Right ventricle myocardium superior (tissue), 1 donor: ENCODE measurements at regions of chr9 and their contacts with region 1.

Region 1: DNA sequence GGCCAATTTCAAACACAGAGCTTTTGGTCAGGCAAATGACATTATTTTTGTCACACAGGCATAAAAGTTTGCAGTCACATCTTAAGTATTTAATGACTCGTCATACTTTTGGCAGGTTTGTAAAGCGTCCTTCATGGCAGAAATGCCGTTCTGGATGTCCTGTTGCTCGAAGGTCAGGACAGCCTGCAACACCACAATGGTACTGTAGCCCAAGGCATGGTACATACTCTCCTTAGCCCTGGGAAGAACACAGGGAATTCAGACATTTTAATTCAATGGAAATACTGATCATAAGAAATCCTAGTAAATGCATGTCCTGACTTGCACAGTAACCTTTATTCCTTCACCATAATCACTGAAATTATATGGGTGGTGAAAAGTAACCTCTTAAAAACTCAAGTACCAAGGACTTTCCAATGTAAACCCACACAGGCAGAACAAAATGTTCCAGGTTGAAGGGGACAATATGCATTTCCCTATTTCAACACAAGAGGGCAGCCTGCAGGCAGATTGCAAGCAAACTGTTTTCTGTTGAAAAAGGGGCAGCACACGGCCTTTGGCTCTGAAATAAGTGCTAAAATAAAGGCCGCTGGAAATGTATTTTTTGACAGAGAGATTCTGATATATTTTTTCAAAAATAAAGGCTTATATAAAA is 95.7 kb downstream of the TTC39B start:
- DNase-seq: no peak
- ATAC-seq: peak; percentile 86

Region 2: DNA sequence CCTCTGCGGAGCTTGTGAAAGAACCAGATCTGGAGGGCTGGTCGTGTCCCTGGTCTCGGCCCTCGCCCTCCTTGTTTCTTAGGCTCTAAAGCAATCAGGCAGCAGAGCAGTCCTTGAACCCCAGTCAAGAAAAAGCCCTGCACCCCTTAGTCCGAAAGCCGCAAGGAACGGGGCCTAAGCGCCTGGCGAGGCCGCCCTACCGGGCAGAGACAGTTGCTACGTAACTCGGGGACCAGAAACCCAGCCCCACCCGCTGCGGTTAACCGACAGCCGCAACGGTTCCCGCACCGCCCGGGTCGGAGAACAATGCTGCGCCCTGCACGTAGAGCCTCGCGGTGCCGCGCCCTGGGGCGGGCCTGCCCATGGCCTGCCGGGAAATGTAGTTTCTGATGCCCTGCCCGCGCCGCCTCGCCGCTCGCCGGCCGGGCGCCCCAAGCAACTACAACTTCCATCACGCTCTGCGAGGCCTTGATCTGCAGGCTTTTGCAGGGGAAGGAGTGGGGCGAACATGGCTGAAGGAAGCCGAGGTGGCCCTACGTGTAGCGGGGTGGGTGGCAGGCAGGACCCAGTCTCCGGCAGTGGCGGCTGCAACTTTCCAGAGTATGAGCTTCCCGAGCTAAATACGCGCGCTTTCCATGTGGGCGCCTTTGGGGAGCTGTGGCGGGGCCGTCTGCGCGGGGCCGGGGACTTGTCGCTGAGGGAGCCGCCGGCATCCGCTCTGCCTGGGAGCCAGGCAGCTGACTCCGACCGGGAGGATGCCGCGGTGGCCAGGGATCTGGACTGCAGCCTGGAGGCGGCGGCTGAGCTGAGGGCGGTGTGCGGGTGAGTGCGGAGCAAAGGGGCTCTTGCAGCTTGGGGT is 211.3 kb after region 1 on chr9 and contains the start of gene SNAPC3:
- intact Hi-C with region 1: loop called (anchors 10 kb)
- DNase-seq: peak; percentile 97
- ATAC-seq: peak; percentile 100
- total RNA-seq, gene SNAPC3: 32.1 TPM

Region 3: DNA sequence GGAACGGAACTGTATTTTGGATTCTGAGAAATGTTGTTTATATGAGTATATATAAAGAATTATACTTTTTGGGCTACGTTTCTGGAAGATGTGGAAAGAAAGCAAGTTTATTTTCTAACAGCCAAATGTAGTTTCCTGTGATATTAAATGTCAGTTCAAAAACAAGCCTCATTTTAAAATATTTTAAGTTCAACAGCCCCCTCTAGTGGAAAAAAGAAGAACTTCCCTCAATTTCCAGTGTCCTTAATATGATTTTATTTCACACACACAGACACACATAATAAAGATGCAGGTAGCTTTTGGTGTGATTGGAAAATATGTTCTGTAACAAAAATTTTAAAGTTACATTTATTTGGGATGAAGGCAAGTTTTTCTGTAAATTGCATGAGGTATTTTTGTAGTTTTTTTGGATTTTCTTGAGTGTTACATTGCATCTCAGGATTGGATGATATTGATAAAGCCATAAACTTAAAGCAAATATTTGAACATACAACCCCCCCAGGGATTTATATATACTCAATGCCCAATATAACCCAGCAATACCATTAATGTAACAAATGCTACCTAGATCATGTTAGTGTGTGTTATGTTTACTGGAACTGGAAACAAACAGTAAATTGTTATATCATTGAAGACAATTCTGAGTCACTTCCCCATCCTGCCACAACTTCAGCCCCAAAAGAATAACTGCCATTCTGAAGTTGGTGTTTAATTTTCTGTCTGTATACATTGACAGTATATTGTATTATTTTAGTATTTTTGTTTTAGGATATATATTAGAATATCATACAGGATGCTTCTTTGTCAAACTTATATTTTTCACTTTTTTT is 395.6 kb after region 1 on chr9:
- intact Hi-C with region 1: loop called (anchors 10 kb)
- DNase-seq: no peak
- ATAC-seq: peak; percentile 49